ENCODE measurements at regions of chr16 and their contacts with region 1.

Region 1: DNA sequence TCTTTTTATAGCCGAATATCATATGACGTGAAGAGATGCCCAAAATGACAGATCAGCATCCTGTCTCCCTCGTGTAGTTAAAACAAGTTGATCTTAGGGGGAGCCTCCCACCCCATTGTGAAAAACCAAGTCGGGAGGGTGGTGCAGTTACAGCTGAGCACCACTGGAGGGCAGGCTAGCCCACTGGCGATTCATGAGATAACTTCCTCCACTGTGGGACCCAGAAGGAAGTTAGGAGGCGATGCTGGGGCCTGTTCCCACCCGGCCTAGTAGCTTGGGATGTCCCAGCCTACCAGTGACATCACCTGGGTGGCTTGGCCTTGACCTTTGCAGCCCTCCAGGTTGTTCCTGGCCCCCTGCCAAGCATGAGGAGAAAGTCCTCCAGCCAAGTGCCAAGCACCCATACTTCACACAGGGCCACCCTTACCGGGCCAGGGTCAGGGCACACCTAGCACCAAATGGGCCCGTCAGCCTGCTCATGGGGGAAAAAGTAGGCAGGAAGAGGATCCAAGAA is 8.1 kb upstream of the CPNE2 start:
- DNase-seq: peak; percentile 53 to 88
- H3K4me3 ChIP-seq: no peak overlapping the region
- H3K27ac ChIP-seq: no peak overlapping the region
- H3K4me1 ChIP-seq: peaks cover 0 to 2% (median 0%) of the 10 kb centered on the region in 4 experiments; a peak in 1 of 7 replicates
- H3K27me3 ChIP-seq: no peaks in the 10 kb centered on the region; a peak in 1 of 7 replicates
- CTCF ChIP-seq: peak; percentile 91 to 98 (median 97)
- EP300 ChIP-seq: no peak
- POLR2A ChIP-seq: no peak
- RAD21 ChIP-seq: peak; percentile 94 to 95

Region 2: GRCh38 chr16:56988948-56989945 is 95.1 kb before region 1 on chr16 and contains the start of gene NLRC5:
- CTCF ChIA-PET with region 1: no interaction called
- POLR2A ChIA-PET with region 1: no interaction called
- DNase-seq: peak in 1 of 2 experiments; percentile 76
- H3K4me3 ChIP-seq: peak within 1 kb of the TSS; percentile 43 to 78 (median 56)
- H3K27ac ChIP-seq: no peak within 1 kb of the TSS
- H3K4me1 ChIP-seq: peaks cover 0 to 7% (median 3%) of the 10 kb centered on the region in 4 experiments; a peak in 3 of 7 replicates
- H3K27me3 ChIP-seq: peaks cover 0 to 33% (median 25%) of the 10 kb centered on the region in 4 experiments; a peak in 6 of 7 replicates
- CTCF ChIP-seq: no peak
- EP300 ChIP-seq: no peak
- POLR2A ChIP-seq: no peak
- RAD21 ChIP-seq: no peak
- total RNA-seq, gene NLRC5: 2.8 and 3.2 TPM in 2 replicates

Region 3: GRCh38 chr16:57003439-57004386 is 80.6 kb before region 1 on chr16:
- CTCF ChIA-PET with region 1: no interaction called
- POLR2A ChIA-PET with region 1: no interaction called
- DNase-seq: no peak
- H3K4me3 ChIP-seq: no peak overlapping the region
- H3K27ac ChIP-seq: no peak overlapping the region
- H3K4me1 ChIP-seq: peaks cover 0 to 11% (median 6%) of the 10 kb centered on the region in 4 experiments; a peak in 4 of 7 replicates
- H3K27me3 ChIP-seq: no peaks in the 10 kb centered on the region
- CTCF ChIP-seq: no peak
- EP300 ChIP-seq: no peak
- POLR2A ChIP-seq: no peak
- RAD21 ChIP-seq: no peak

Region 4: GRCh38 chr16:57038166-57038565 is 46.1 kb before region 1 on chr16:
- CTCF ChIA-PET with region 1: no interaction called
- POLR2A ChIA-PET with region 1: no interaction called
- DNase-seq: no peak
- H3K4me3 ChIP-seq: no peak overlapping the region
- H3K27ac ChIP-seq: no peak overlapping the region
- H3K4me1 ChIP-seq: no peaks in the 10 kb centered on the region
- H3K27me3 ChIP-seq: no peaks in the 10 kb centered on the region
- CTCF ChIP-seq: no peak
- EP300 ChIP-seq: no peak
- POLR2A ChIP-seq: no peak
- RAD21 ChIP-seq: no peak

Region 5: GRCh38 chr16:57066625-57067024 is 17.7 kb before region 1 on chr16:
- CTCF ChIA-PET with region 1: interaction called, 14 read pairs
- POLR2A ChIA-PET with region 1: no interaction called
- DNase-seq: no peak
- H3K4me3 ChIP-seq: no peak overlapping the region
- H3K27ac ChIP-seq: no peak overlapping the region
- H3K4me1 ChIP-seq: peaks cover 0 to 3% (median 0%) of the 10 kb centered on the region in 4 experiments; a peak in 1 of 7 replicates
- H3K27me3 ChIP-seq: no peaks in the 10 kb centered on the region
- CTCF ChIP-seq: no peak
- EP300 ChIP-seq: no peak
- POLR2A ChIP-seq: no peak
- RAD21 ChIP-seq: no peak

Region 6: GRCh38 chr16:57071831-57072582 is 12.3 kb before region 1 on chr16:
- CTCF ChIA-PET with region 1: interaction called, 14 read pairs
- POLR2A ChIA-PET with region 1: no interaction called
- DNase-seq: no peak
- H3K4me3 ChIP-seq: no peak overlapping the region
- H3K27ac ChIP-seq: no peak overlapping the region
- H3K4me1 ChIP-seq: peaks cover 0 to 4% (median 2%) of the 10 kb centered on the region in 4 experiments; a peak in 1 of 7 replicates
- H3K27me3 ChIP-seq: no peaks in the 10 kb centered on the region; a peak in 1 of 7 replicates
- CTCF ChIP-seq: no peak
- EP300 ChIP-seq: no peak
- POLR2A ChIP-seq: no peak
- RAD21 ChIP-seq: no peak

Region 7: GRCh38 chr16:57106767-57107166 is 22.5 kb after region 1 on chr16:
- CTCF ChIA-PET with region 1: interaction called, 100 read pairs
- POLR2A ChIA-PET with region 1: no interaction called
- DNase-seq: no peak
- H3K4me3 ChIP-seq: no peak overlapping the region
- H3K27ac ChIP-seq: no peak overlapping the region
- H3K4me1 ChIP-seq: peaks cover 3 to 13% (median 9%) of the 10 kb centered on the region in 4 experiments
- H3K27me3 ChIP-seq: no peaks in the 10 kb centered on the region
- CTCF ChIP-seq: no peak
- EP300 ChIP-seq: no peak
- POLR2A ChIP-seq: no peak
- RAD21 ChIP-seq: no peak

Region 8: GRCh38 chr16:57141822-57142631 is 57.7 kb after region 1 on chr16:
- CTCF ChIA-PET with region 1: interaction called, 32 read pairs
- POLR2A ChIA-PET with region 1: interaction called, 3 read pairs
- DNase-seq: no peak
- H3K4me3 ChIP-seq: no peak overlapping the region
- H3K27ac ChIP-seq: no peak overlapping the region
- H3K4me1 ChIP-seq: peaks cover 0 to 9% (median 7%) of the 10 kb centered on the region in 4 experiments; a peak in 6 of 7 replicates
- H3K27me3 ChIP-seq: no peaks in the 10 kb centered on the region
- CTCF ChIP-seq: no peak
- EP300 ChIP-seq: no peak
- POLR2A ChIP-seq: no peak
- RAD21 ChIP-seq: no peak

Region 9: GRCh38 chr16:57147381-57148221 is 63.3 kb after region 1 on chr16:
- CTCF ChIA-PET with region 1: interaction called, 32 read pairs
- POLR2A ChIA-PET with region 1: interaction called, 3 read pairs
- DNase-seq: no peak
- H3K4me3 ChIP-seq: peak overlapping the region in 1 of 4 experiments; percentile 7; a peak in 3 of 8 replicates
- H3K27ac ChIP-seq: peak overlapping the region; percentile 42; the same call in 1 of the 2 replicates
- H3K4me1 ChIP-seq: peaks cover 13 to 33% (median 16%) of the 10 kb centered on the region in 4 experiments
- H3K27me3 ChIP-seq: no peaks in the 10 kb centered on the region
- CTCF ChIP-seq: no peak
- EP300 ChIP-seq: no peak
- POLR2A ChIP-seq: no peak
- RAD21 ChIP-seq: no peak

Region 10: GRCh38 chr16:57167953-57168352 is 83.6 kb after region 1 on chr16:
- CTCF ChIA-PET with region 1: interaction called, 13 read pairs
- POLR2A ChIA-PET with region 1: no interaction called
- DNase-seq: no peak
- H3K4me3 ChIP-seq: no peak overlapping the region
- H3K27ac ChIP-seq: no peak overlapping the region
- H3K4me1 ChIP-seq: no peaks in the 10 kb centered on the region
- H3K27me3 ChIP-seq: no peaks in the 10 kb centered on the region
- CTCF ChIP-seq: peak in 2 of 3 experiments; percentile 41 to 49; a peak in 2 of 4 replicates
- EP300 ChIP-seq: no peak
- POLR2A ChIP-seq: no peak
- RAD21 ChIP-seq: peak; percentile 79 to 83